Ascending aorta (tissue), 2 donors: ENCODE measurements at regions of chr4 and their contacts with region 1.

Region 1: GRCh38 chr4:3783406-3784306 is 17.5 kb downstream of the ADRA2C start:
- DNase-seq: no peak
- H3K4me3 ChIP-seq: no peak overlapping the region
- H3K27ac ChIP-seq: no peak overlapping the region
- H3K4me1 ChIP-seq: no peaks in the 10 kb centered on the region
- H3K27me3 ChIP-seq: no peaks in the 10 kb centered on the region
- CTCF ChIP-seq: peak in 2 of 3 experiments; percentile 29 to 45

Region 2: DNA sequence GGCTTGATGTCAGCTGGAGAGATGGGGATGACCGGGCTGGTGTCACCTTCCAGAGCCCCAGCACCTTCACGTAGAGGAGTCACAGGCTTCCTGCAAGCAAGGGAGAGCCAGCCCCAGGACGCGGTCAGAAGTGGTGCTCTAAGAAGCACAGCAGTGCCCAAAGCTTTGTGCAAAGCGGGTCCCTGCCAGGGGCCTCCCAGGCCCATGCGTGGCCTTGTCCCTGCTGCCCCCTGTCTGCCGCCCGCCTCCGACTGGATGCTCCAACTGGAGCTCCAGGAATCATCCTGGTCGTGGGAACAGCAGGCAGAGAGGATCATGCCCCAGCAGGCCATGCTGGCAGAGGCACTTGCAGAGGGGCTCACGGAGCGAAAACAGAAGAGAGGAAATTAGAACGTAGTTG is 211.3 kb before region 1 on chr4:
- intact Hi-C with region 1: loop called (anchors 5 kb)
- DNase-seq: no peak
- H3K4me3 ChIP-seq: no peak overlapping the region
- H3K27ac ChIP-seq: no peak overlapping the region
- H3K4me1 ChIP-seq: no peaks in the 10 kb centered on the region
- H3K27me3 ChIP-seq: no peaks in the 10 kb centered on the region
- CTCF ChIP-seq: no peak

Region 3: GRCh38 chr4:4260253-4260652 is 476.6 kb after region 1 on chr4:
- intact Hi-C with region 1: no loop called
- DNase-seq: no peak
- H3K4me3 ChIP-seq: no peak overlapping the region
- H3K27ac ChIP-seq: no peak overlapping the region
- H3K4me1 ChIP-seq: no peaks in the 10 kb centered on the region
- H3K27me3 ChIP-seq: no peaks in the 10 kb centered on the region
- CTCF ChIP-seq: no peak